ENCODE measurements at regions of chr2 and their contacts with region 1.

Region 1: GRCh38 chr2:70871398-70872211 is 36.0 kb upstream of the CD207 start:
- DNase-seq: peak; percentile 35
- H3K4me3 ChIP-seq: peak overlapping the region in 1 of 4 donors; percentile 42
- H3K27ac ChIP-seq: no peak overlapping the region
- H3K4me1 ChIP-seq: peaks cover 4 to 11% (median 6%) of the 10 kb centered on the region in 3 donors
- H3K27me3 ChIP-seq: peaks cover 0 to 67% (median 0%) of the 10 kb centered on the region in 4 donors
- CTCF ChIP-seq: peak; percentile 77 to 89 (median 86)
- POLR2A ChIP-seq: no peak

Region 2: DNA sequence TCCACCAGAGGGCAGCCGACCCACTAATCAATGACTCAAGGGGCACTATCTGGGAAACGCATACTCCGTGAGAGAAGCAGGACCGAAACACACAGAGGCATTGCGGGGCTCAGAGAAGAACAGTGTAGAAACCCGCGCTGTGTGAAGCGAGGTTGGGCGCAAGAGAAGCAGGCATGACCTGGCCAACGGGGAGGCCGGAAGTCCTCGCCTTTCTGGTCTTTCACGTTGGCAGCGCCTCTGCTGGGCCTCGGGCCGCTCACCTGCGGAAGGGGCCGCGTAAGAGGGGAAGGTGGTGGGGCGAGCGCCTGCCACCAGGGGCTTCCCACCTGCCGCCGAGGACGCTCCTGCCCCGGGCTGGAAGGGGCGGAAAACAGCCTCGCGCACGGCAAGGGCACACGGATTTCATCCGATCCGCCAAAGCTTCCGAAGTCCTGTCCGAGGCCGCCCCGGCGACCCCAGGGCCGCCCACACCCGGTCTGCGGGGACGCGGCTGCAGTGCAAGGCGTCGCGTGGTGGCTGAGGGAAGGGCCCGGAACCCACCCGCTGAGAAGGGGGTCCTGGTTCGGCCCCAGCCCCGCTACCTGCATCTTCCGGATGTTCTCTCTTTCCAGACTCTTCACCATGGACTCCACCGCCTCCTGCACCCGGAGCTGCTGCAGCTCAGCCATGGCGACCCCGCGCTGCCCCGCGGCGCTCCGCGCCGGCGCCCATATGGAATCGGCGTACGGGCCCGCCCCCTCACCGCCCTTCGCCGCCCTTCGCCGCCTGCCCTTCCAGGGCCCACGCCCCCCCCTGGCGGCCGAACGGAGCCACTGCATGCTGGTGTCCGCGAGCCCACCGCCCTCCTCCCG is 570.0 kb before region 1 on chr2 and contains the start of gene FAM136A:
- intact Hi-C with region 1: no loop called
- DNase-seq: peak; percentile 29
- H3K4me3 ChIP-seq: peak within 1 kb of the TSS; percentile 73 to 100 (median 98)
- H3K27ac ChIP-seq: peak within 1 kb of the TSS; percentile 87 to 96 (median 94)
- H3K4me1 ChIP-seq: peaks cover 4 to 26% (median 12%) of the 10 kb centered on the region in 3 donors
- H3K27me3 ChIP-seq: no peaks in the 10 kb centered on the region
- CTCF ChIP-seq: peak; percentile 93 to 98 (median 98)
- POLR2A ChIP-seq: peak in 1 of 4 donors; percentile 44
- total RNA-seq, gene FAM136A: 26.9 to 51.1 (median 39.9) TPM

Region 3: DNA sequence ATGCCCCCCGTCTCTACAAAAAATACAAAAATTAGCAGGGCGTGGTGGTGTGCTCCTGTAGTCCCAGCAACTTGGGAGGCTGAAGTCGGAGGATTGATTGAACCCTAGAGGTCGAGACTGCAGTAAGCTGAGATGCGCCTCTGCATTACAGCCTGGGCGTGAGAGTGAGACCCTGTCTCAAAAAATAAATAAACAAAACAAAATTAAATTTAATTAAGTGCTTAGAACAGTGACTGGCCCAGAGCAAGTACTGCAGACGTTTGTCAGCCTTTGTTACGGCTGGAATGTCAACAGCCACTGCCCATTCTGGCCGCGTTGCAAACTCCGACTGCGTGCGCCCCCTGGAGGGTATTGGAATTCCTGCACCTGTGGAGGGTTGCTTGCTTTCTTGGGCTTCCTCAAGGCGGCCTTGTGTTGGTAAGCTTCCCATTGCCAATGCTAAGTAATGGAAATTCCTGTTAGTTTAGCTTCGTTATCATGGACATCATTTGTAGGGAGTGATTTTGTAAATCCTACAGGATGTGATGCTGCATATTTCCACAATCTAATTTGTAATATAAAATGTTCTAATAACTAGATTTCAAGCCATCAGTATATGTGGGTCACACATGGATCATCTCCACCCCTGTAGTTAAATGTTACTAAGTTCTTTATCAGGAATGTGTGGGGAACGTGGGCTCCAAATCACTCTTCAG is 48.2 kb after region 1 on chr2:
- intact Hi-C with region 1: loop called (anchors 5 kb)
- DNase-seq: peak; percentile 9
- H3K4me3 ChIP-seq: no peak overlapping the region
- H3K27ac ChIP-seq: no peak overlapping the region
- H3K4me1 ChIP-seq: no peaks in the 10 kb centered on the region
- H3K27me3 ChIP-seq: peaks cover 0 to 74% (median 0%) of the 10 kb centered on the region in 4 donors
- CTCF ChIP-seq: peak; percentile 71 to 87 (median 84)
- POLR2A ChIP-seq: no peak

Measured in esophagus squamous epithelium (tissue), 5 donors.